Activated CD4-positive, alpha-beta memory T cell treated with anti-CD3 and anti-CD28 coated beads, Interleukin-2, amount 10 ng/mL, durations not matched to agents 7 days and 5 days (primary cell): ENCODE measurements at regions of chr17 and their contacts with region 1.

Region 1: GRCh38 chr17:50139950-50140871 is 10.3 kb upstream of the SAMD14 start:
- DNase-seq: peak; percentile 86
- H3K4me3 Mint-ChIP-seq: peak overlapping the region; percentile 69
- H3K27ac Mint-ChIP-seq: peak overlapping the region; percentile 95
- H3K4me1 Mint-ChIP-seq: peaks cover 71% of the 10 kb centered on the region
- H3K27me3 Mint-ChIP-seq: no peaks in the 10 kb centered on the region

Region 2: GRCh38 chr17:49944273-49944890 is 195.8 kb before region 1 on chr17:
- CTCF ChIA-PET with region 1: no interaction called
- POLR2A ChIA-PET with region 1: no interaction called
- DNase-seq: no peak
- H3K4me3 Mint-ChIP-seq: no peak overlapping the region
- H3K27ac Mint-ChIP-seq: no peak overlapping the region
- H3K4me1 Mint-ChIP-seq: no peaks in the 10 kb centered on the region
- H3K27me3 Mint-ChIP-seq: peaks cover 42% of the 10 kb centered on the region

Region 3: DNA sequence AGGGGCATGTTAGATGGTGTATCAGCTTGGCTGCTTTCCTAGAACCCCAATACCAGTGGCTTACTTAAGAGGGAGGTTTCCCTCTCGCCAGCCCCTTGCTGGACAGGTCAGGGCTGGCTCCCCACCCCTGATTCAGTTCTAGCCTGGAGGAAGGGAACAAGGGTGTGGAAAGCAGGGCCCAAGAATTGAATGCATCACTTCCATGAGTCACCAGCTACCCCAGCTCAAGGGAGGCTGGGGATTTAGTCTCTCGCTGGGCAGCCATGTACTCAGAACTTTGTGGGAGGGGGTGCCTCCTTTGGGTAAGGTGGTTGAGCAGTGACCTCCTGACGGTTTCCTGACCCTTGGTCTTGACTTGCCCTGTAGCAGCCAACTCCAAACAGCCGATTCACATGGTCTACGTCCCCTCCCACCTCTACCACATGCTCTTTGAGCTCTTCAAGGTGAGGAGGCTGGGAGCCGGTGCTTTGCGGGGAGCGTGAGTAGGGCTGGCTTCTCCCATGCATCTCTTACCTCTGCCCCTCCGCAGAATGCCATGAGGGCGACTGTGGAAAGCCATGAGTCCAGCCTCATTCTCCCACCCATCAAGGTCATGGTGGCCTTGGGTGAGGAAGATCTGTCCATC is 32.3 kb before region 1 on chr17:
- CTCF ChIA-PET with region 1: no interaction called
- POLR2A ChIA-PET with region 1: no interaction called
- DNase-seq: no peak
- H3K4me3 Mint-ChIP-seq: no peak overlapping the region
- H3K27ac Mint-ChIP-seq: no peak overlapping the region
- H3K4me1 Mint-ChIP-seq: no peaks in the 10 kb centered on the region
- H3K27me3 Mint-ChIP-seq: no peaks in the 10 kb centered on the region

Region 4: DNA sequence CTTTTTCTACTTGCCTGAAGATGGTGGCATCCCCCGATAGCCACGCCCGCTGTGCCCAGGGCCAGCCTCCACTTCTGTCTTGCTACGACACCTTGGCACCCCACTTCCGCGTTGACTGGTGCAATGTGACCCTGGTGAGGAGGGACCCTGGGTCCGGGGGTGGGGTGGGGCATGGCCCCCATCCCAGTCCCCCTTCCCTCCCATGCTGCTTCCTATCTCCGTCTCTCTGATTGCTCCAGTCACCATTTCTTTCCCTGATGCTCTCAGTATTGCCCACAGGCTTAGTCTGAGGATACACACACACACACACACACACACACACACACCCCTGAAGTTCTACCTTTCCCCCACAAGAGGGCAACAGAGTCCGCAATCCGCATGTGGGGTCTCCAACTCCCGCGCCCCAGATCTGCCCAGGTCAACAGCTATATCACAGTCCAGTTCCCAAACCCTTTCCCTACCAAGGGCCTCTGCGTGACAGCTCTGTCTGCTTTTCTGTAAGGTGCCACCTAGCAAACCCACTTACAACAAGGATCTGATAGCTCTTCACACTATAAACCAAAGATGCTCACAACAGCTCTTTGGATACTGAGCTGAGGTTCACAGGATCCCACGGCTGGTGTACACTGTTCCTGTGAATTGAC is 29.0 kb after region 1 on chr17:
- CTCF ChIA-PET with region 1: interaction called, 13 read pairs
- POLR2A ChIA-PET with region 1: interaction called, 4 read pairs
- DNase-seq: peak; percentile 65
- H3K4me3 Mint-ChIP-seq: peak overlapping the region; percentile 12
- H3K27ac Mint-ChIP-seq: no peak overlapping the region
- H3K4me1 Mint-ChIP-seq: peaks cover 24% of the 10 kb centered on the region
- H3K27me3 Mint-ChIP-seq: peaks cover 4% of the 10 kb centered on the region